ENCODE measurements at regions of chr3 and their contacts with region 1.

Region 1: GRCh38 chr3:50611464-50612233 is at the start of gene CISH:
- DNase-seq: no peak
- ATAC-seq: peak; percentile 87
- H3K4me3 ChIP-seq: peak within 1 kb of the TSS; percentile 48 to 61
- H3K27ac ChIP-seq: 0 out of 2 replicates have a peak within 1 kb of the TSS, but pooled peaks have one; percentile 29
- H3K4me1 ChIP-seq: no peaks in the 10 kb centered on the region; the same call in 1 of the 2 replicates
- H3K27me3 ChIP-seq: no peaks in the 10 kb centered on the region
- CTCF ChIP-seq: peak; percentile 18; the same call in 1 of the 2 replicates
- total RNA-seq, gene CISH: 0.57 TPM

Region 2: GRCh38 chr3:50292159-50293078 is 319.2 kb before region 1 on chr3 and contains the start of gene IFRD2:
- CTCF ChIA-PET with region 1: no interaction called
- POLR2A ChIA-PET with region 1: interaction called, 16 read pairs
- in situ Hi-C with region 1: no loop called
- intact Hi-C with region 1: no loop called
- DNase-seq: peak; percentile 83
- ATAC-seq: peak; percentile 98
- H3K4me3 ChIP-seq: peak within 1 kb of the TSS; percentile 87 to 89
- H3K27ac ChIP-seq: peak within 1 kb of the TSS; percentile 93
- H3K4me1 ChIP-seq: peaks cover 9% of the 10 kb centered on the region
- H3K27me3 ChIP-seq: no peaks in the 10 kb centered on the region
- CTCF ChIP-seq: no peak
- total RNA-seq, gene IFRD2: 111 TPM

Region 3: DNA sequence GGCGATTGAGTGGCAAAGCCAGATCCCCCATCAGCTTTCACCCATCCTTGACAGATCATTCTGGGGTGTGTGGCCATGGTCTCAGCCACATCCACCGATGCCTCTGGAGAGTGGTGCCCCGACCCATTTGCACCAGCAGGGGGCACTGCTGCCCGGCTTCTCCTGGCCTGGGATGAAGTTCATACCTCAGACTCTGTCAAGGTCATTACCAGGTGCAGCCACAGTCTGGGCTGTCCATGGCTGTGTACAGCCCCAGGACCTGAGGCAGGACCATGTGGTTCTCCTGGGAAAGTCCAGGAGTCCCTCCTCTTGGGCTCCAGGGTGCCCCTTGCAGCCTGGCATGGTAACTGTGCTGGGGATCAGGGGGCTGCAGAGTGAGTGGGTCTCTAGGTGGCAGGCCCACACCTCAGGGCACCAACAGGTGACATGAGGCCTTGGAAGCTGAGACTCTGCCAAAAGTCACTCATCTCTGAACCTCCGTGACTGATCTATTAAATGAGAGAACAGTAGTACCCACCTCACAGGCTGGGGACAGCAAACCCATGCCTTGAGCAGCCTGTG is 175.5 kb before region 1 on chr3:
- CTCF ChIA-PET with region 1: interaction called, 9 read pairs
- POLR2A ChIA-PET with region 1: no interaction called
- in situ Hi-C with region 1: no loop called
- intact Hi-C with region 1: loop called (anchors 5 kb)
- DNase-seq: peak; percentile 22
- ATAC-seq: peak; percentile 90
- H3K4me3 ChIP-seq: no peak overlapping the region
- H3K27ac ChIP-seq: no peak overlapping the region
- H3K4me1 ChIP-seq: no peaks in the 10 kb centered on the region
- H3K27me3 ChIP-seq: no peaks in the 10 kb centered on the region
- CTCF ChIP-seq: peak; percentile 88

Region 4: GRCh38 chr3:50519471-50520089 is 92.1 kb before region 1 on chr3:
- CTCF ChIA-PET with region 1: no interaction called
- POLR2A ChIA-PET with region 1: no interaction called
- in situ Hi-C with region 1: no loop called
- intact Hi-C with region 1: loop called (anchors 2 kb)
- DNase-seq: peak; percentile 42
- ATAC-seq: peak; percentile 87
- H3K4me3 ChIP-seq: no peak overlapping the region
- H3K27ac ChIP-seq: no peak overlapping the region
- H3K4me1 ChIP-seq: no peaks in the 10 kb centered on the region
- H3K27me3 ChIP-seq: no peaks in the 10 kb centered on the region
- CTCF ChIP-seq: peak; percentile 91

Region 5: GRCh38 chr3:50572158-50572557 is 39.5 kb before region 1 on chr3:
- CTCF ChIA-PET with region 1: interaction called, 3 read pairs
- POLR2A ChIA-PET with region 1: no interaction called
- in situ Hi-C with region 1: no loop called
- intact Hi-C with region 1: loop called (anchors 1 kb)
- DNase-seq: peak; percentile 51
- ATAC-seq: no peak
- H3K4me3 ChIP-seq: no peak overlapping the region
- H3K27ac ChIP-seq: no peak overlapping the region
- H3K4me1 ChIP-seq: peaks cover 7% of the 10 kb centered on the region
- H3K27me3 ChIP-seq: no peaks in the 10 kb centered on the region
- CTCF ChIP-seq: peak; percentile 79

Region 6: DNA sequence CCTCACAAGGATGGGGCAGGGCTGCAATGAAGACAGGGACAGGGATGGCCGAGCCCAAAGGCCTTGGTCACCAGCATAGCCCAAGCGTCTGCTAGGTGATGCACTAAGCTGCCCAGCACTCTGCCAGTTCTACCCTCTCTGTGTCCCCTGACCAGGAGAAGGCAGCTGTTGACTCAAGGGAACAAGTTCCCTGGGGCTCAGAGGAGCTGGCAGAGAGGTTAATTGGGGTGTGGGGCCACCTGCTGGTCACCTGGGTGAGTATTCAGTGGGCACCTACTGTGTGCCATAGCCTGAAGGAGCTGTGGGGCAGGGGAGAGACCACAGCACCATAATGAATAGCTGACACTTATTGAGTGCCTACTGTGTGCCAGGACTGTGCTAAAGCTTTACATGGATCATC is 41.1 kb after region 1 on chr3:
- CTCF ChIA-PET with region 1: interaction called, 8 read pairs
- POLR2A ChIA-PET with region 1: no interaction called
- in situ Hi-C with region 1: no loop called
- intact Hi-C with region 1: loop called (anchors 5 kb)
- DNase-seq: no peak
- ATAC-seq: peak; percentile 86
- H3K4me3 ChIP-seq: no peak overlapping the region
- H3K27ac ChIP-seq: no peak overlapping the region
- H3K4me1 ChIP-seq: no peaks in the 10 kb centered on the region
- H3K27me3 ChIP-seq: no peaks in the 10 kb centered on the region
- CTCF ChIP-seq: no peak; the same call in 1 of the 2 replicates

Region 7: DNA sequence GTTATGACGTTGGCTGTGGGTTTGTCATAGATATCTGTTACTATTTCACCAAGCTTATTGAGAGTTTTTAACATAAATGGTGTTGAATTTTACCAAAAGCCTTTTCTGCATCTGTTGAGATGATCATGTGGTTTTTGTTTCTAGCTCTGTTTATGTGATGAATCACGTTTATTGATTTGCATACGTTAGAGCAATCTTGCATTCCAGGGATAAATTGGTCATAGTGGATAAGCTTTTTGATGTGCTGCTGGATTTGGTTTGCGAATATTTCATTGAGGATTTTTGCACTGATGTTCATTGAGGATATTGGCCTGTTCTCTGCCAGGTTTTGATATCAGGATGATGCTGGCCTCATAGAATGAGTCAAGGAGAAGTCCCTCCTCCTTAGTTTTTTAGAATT is 180.9 kb after region 1 on chr3:
- CTCF ChIA-PET with region 1: no interaction called
- POLR2A ChIA-PET with region 1: no interaction called
- in situ Hi-C with region 1: no loop called
- intact Hi-C with region 1: no loop called
- DNase-seq: no peak
- ATAC-seq: no peak
- H3K4me3 ChIP-seq: no peak overlapping the region
- H3K27ac ChIP-seq: no peak overlapping the region
- H3K4me1 ChIP-seq: no peaks in the 10 kb centered on the region
- H3K27me3 ChIP-seq: no peaks in the 10 kb centered on the region
- CTCF ChIP-seq: no peak

Region 8: DNA sequence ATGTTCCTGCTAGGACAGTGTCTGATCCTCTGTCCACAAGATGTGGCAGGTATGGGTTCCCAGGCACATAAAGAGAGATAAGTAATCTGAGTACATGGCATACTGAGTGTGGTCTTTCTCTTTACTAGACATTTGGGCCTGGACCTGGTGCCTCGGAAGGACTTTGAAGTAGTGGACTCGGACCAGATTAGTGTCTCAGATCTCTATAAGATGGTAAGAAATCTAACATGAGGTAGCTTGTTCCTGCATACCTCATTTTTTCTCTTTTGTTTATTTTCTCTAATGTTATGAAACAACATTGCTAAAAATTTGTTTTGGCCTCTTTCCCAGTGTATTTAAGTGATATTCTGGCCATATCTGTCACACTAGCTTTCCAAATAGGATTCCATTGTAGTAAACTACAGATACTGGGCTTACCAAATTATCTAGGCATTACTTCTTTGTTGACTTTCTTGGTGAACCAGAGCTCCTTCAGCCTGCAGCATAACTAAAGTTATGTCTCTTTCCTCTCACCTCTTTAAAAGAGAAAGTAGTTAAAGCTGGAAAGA is 463.7 kb after region 1 on chr3:
- CTCF ChIA-PET with region 1: no interaction called
- POLR2A ChIA-PET with region 1: no interaction called
- in situ Hi-C with region 1: no loop called
- intact Hi-C with region 1: no loop called
- DNase-seq: no peak
- ATAC-seq: no peak
- H3K4me3 ChIP-seq: no peak overlapping the region
- H3K27ac ChIP-seq: no peak overlapping the region
- H3K4me1 ChIP-seq: no peaks in the 10 kb centered on the region
- H3K27me3 ChIP-seq: no peaks in the 10 kb centered on the region; the same call in 1 of the 2 replicates
- CTCF ChIP-seq: no peak

Region 9: DNA sequence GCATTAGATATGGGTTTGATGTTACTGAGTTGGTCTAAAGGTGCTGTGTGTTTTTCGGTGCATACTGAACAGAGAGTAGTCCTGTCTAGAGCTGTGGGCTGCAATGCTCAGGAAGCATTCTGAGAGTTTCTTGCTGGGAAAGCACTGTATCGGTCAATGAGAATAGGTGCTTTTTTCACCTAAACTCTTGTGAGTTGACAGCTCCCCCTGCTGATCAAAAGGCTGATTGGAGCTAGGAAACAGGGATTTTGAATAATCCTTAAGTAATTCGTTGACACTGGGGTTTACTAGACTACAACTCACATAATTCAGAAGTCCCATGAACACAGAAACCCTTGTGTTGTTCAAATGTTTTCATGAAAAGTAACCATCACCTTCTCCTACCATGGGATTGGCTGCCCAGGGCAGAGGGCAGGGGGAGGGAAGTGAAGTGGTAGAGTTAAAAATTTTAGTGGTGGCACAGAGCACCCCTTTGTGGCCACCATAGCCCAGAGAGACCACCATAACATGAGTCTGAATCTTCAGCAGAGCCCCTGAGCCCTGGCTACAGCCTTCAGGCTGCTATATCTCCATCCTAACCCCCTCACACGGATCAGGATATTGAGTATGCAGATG is 760.4 kb after region 1 on chr3:
- CTCF ChIA-PET with region 1: interaction called, 3 read pairs
- POLR2A ChIA-PET with region 1: no interaction called
- in situ Hi-C with region 1: no loop called
- intact Hi-C with region 1: loop called (anchors 2 kb)
- DNase-seq: peak; percentile 35
- ATAC-seq: peak; percentile 85
- H3K4me3 ChIP-seq: no peak overlapping the region
- H3K27ac ChIP-seq: no peak overlapping the region
- H3K4me1 ChIP-seq: no peaks in the 10 kb centered on the region
- H3K27me3 ChIP-seq: no peaks in the 10 kb centered on the region
- CTCF ChIP-seq: peak; percentile 79